GM12878 (cell line): ENCODE measurements at regions of chr17 and their contacts with region 1.

Region 1: DNA sequence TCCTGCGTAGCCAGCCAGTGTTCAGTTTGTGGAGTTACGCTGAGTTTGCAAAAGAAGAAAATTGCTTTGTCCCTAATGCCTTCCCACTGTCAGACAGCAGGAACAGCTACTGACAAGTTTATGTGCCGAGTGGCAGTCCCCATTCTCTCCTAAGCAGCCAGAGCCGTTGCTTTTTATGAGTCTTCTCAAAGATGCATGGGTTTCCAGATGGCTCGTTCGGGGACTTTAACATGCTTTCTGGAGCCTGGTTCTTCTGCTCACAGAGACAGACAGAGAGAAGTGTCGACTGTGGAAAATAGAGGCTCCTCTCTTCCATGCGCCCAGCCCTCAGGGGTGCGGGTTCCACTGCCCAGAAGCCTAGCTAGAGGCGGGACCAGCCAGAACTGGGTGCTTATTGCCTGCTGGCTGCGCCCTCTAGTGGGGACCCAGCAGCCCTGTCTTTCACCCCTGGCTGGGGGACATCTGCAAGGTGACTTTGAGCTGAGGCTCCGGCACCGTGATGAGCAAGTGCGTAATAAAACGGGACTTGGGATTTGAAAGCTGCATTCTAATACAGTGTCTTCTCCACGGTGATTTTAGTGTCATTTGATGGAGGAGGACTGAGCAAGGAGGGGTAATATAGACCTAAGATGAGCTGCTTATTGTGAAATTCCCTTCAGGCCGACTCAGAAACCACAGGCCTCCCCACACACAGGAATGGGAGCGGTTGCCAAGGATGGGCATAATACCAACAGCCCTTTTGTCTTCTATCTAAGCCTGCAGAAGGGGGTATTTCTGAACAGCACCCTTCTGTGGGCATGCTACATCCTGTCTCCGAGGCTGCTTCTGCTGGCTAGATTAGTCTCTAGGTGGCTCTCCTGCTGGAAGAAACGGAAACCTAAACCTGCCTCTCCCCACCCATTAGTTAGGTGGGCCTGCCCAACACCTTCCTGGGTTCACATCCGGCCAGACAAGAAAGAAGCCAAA is 73.1 kb downstream of the CCDC182 start:
- DNase-seq: no peak
- ATAC-seq: peak; percentile 100
- H3K4me3 ChIP-seq: no peak overlapping the region
- H3K27ac ChIP-seq: no peak overlapping the region
- H3K4me1 ChIP-seq: peaks cover 4% of the 10 kb centered on the region; the same call in 1 of the 2 replicates
- H3K27me3 ChIP-seq: no peaks in the 10 kb centered on the region
- CTCF ChIP-seq: peak; percentile 90 to 95 (median 93)
- EP300 ChIP-seq: no peak
- POLR2A ChIP-seq: no peak
- RAD21 ChIP-seq: peak; percentile 82

Region 2: GRCh38 chr17:57408071-57408811 is 263.7 kb before region 1 on chr17:
- CTCF ChIA-PET with region 1: interaction called, 20 read pairs
- POLR2A ChIA-PET with region 1: no interaction called
- RAD21 ChIA-PET with region 1: interaction called, 5 read pairs
- SMC1A ChIA-PET with region 1: no interaction called
- in situ Hi-C with region 1: no loop called
- intact Hi-C with region 1: no loop called
- DNase-seq: peak; percentile 46
- ATAC-seq: peak; percentile 92
- H3K4me3 ChIP-seq: no peak overlapping the region
- H3K27ac ChIP-seq: peak overlapping the region; percentile 54
- H3K4me1 ChIP-seq: peaks cover 9% of the 10 kb centered on the region
- H3K27me3 ChIP-seq: no peaks in the 10 kb centered on the region
- CTCF ChIP-seq: peak in 1 of 3 experiments; percentile 10; a peak in 1 of 6 replicates
- EP300 ChIP-seq: no peak
- POLR2A ChIP-seq: no peak
- RAD21 ChIP-seq: no peak

Region 3: GRCh38 chr17:57463103-57463851 is 208.7 kb before region 1 on chr17:
- CTCF ChIA-PET with region 1: interaction called, 10 read pairs
- POLR2A ChIA-PET with region 1: no interaction called
- RAD21 ChIA-PET with region 1: interaction called, 7 read pairs
- SMC1A ChIA-PET with region 1: interaction called, 6 read pairs
- in situ Hi-C with region 1: no loop called
- intact Hi-C with region 1: loop called (anchors 10 kb)
- DNase-seq: peak; percentile 97
- ATAC-seq: peak; percentile 91
- H3K4me3 ChIP-seq: peak overlapping the region; percentile 55
- H3K27ac ChIP-seq: peak overlapping the region; percentile 99
- H3K4me1 ChIP-seq: peaks cover 91% of the 10 kb centered on the region
- H3K27me3 ChIP-seq: no peaks in the 10 kb centered on the region
- CTCF ChIP-seq: no peak
- EP300 ChIP-seq: peak; percentile 95 to 96
- POLR2A ChIP-seq: peak; percentile 75
- RAD21 ChIP-seq: no peak

Region 4: GRCh38 chr17:57511430-57512123 is 160.4 kb before region 1 on chr17:
- CTCF ChIA-PET with region 1: no interaction called
- POLR2A ChIA-PET with region 1: no interaction called
- RAD21 ChIA-PET with region 1: no interaction called
- SMC1A ChIA-PET with region 1: no interaction called
- in situ Hi-C with region 1: no loop called
- intact Hi-C with region 1: no loop called
- DNase-seq: no peak
- ATAC-seq: no peak
- H3K4me3 ChIP-seq: no peak overlapping the region
- H3K27ac ChIP-seq: no peak overlapping the region
- H3K4me1 ChIP-seq: peaks cover 4% of the 10 kb centered on the region; the same call in 1 of the 2 replicates
- H3K27me3 ChIP-seq: no peaks in the 10 kb centered on the region
- CTCF ChIP-seq: no peak
- EP300 ChIP-seq: no peak
- POLR2A ChIP-seq: no peak
- RAD21 ChIP-seq: no peak

Region 5: DNA sequence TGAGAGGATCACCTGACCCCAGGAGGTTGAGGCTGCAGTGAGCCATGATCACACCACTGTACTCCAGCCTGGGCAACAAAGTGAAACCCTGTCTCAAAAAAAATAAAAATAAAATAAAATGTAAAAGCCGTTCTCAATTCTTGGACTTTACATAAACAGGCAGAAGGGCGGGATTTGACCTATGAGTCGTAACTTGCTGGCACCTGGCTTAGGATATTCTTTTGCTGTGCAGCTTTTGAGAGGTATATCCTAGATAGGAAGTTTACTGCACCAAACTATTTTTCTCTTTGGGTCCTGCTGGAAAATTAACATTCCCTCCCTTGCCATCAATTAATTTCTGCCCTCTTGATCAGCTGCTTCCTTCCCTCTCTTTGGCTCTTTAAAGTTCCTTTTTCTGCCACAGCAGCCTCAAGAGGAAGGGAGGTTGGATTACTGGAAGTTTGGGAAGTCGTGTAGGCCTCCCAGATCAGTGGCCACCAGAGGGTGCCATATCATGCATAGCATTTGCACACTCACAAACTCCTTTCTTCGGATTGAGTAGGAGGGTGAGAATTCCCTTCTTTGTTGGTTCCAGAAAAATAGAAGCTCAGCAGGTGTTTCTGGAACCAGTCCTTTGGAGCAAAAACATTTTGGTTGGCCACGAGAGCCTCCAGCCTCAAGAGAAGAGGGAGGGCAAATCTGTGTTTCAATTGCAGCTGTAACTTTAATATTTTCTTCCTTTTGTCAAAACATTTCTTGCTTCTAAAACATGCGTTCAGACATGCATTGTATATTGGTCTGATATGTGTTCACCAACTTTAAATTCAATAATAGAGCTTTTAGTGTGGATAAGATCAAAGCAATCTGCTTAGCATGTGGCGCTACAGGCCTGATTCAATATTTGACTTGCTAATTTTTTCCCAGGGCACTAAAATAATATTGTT is 74.2 kb before region 1 on chr17:
- CTCF ChIA-PET with region 1: interaction called, 58 read pairs
- POLR2A ChIA-PET with region 1: no interaction called
- RAD21 ChIA-PET with region 1: interaction called, 18 read pairs
- SMC1A ChIA-PET with region 1: interaction called, 12 read pairs
- in situ Hi-C with region 1: no loop called
- intact Hi-C with region 1: loop called (anchors 1 kb)
- DNase-seq: no peak
- ATAC-seq: no peak
- H3K4me3 ChIP-seq: no peak overlapping the region
- H3K27ac ChIP-seq: no peak overlapping the region
- H3K4me1 ChIP-seq: peaks cover 16% of the 10 kb centered on the region
- H3K27me3 ChIP-seq: no peaks in the 10 kb centered on the region
- CTCF ChIP-seq: peak; percentile 49 to 72 (median 61)
- EP300 ChIP-seq: no peak
- POLR2A ChIP-seq: no peak
- RAD21 ChIP-seq: peak; percentile 57

Region 6: DNA sequence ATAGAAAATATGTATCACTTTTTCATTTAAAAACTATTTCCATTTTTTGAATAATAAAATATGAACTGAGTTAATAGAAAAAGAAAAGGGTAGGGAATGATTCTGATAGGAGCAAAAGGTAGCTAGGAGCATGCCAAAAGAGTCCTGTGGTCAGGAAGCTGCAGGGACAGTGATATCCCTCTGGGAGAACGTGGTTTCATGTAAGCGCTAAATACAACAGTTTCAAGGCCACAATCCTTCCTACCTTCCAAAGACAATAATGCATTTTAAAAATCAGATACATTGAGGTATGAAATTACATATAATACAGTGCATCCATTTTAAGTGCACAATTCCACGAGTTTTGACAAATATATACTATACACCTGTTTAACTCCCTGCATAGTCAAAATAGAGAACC is 17.3 kb after region 1 on chr17:
- CTCF ChIA-PET with region 1: interaction called, 10 read pairs
- POLR2A ChIA-PET with region 1: no interaction called
- RAD21 ChIA-PET with region 1: interaction called, 4 read pairs
- SMC1A ChIA-PET with region 1: interaction called, 3 read pairs
- in situ Hi-C with region 1: no loop called
- intact Hi-C with region 1: no loop called
- DNase-seq: no peak
- ATAC-seq: no peak
- H3K4me3 ChIP-seq: no peak overlapping the region
- H3K27ac ChIP-seq: no peak overlapping the region
- H3K4me1 ChIP-seq: no peaks in the 10 kb centered on the region
- H3K27me3 ChIP-seq: no peaks in the 10 kb centered on the region
- CTCF ChIP-seq: no peak
- EP300 ChIP-seq: no peak
- POLR2A ChIP-seq: no peak
- RAD21 ChIP-seq: no peak

Region 7: DNA sequence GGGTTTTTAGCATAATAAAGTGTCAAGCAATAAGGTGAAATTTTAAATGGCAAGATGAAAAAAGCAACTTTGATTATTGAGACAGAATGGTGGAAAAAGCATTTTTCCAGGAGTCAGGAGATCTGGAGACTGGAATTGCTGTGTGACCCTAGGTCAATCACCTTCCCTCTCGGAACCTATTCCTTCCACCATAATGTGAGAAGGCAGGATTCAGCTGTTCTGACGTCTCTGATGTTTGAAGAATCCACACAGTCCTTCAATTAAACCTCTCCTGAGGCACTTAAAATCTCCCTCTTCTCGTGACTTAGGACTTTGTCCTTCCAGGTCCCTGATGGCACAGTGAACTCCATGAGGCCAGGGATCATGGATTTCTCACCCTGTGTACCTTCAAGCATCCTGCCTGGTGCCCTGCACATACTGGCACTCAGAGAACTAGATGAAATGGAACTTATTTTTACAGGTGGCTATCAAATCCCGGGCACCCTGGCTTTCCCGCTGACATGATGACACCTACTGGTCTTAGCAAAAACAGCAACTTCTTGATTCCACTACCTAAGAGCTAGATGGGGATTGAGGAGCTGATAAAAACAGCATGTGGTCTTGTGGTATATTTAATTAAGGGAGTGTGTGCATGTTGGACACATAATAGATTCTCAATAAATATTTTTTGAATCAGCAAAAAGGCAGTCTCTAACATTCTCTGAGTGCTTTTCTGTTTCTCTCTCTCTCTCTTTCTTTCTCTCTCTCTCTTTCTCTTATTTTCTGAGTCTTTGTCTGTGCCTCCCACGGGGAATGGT is 75.5 kb after region 1 on chr17:
- CTCF ChIA-PET with region 1: interaction called, 32 read pairs
- POLR2A ChIA-PET with region 1: no interaction called
- RAD21 ChIA-PET with region 1: interaction called, 7 read pairs
- SMC1A ChIA-PET with region 1: interaction called, 11 read pairs
- in situ Hi-C with region 1: no loop called
- intact Hi-C with region 1: loop called (anchors 5 kb)
- DNase-seq: no peak
- ATAC-seq: peak; percentile 83
- H3K4me3 ChIP-seq: no peak overlapping the region
- H3K27ac ChIP-seq: no peak overlapping the region
- H3K4me1 ChIP-seq: peaks cover 12% of the 10 kb centered on the region
- H3K27me3 ChIP-seq: no peaks in the 10 kb centered on the region; a peak in 2 of 4 replicates
- CTCF ChIP-seq: peak; percentile 79 to 87 (median 84)
- EP300 ChIP-seq: no peak
- POLR2A ChIP-seq: no peak
- RAD21 ChIP-seq: peak; percentile 94